CD8-positive, alpha-beta T cell (primary cell): ENCODE measurements at regions of chr1 and their contacts with region 1.

Region 1: DNA sequence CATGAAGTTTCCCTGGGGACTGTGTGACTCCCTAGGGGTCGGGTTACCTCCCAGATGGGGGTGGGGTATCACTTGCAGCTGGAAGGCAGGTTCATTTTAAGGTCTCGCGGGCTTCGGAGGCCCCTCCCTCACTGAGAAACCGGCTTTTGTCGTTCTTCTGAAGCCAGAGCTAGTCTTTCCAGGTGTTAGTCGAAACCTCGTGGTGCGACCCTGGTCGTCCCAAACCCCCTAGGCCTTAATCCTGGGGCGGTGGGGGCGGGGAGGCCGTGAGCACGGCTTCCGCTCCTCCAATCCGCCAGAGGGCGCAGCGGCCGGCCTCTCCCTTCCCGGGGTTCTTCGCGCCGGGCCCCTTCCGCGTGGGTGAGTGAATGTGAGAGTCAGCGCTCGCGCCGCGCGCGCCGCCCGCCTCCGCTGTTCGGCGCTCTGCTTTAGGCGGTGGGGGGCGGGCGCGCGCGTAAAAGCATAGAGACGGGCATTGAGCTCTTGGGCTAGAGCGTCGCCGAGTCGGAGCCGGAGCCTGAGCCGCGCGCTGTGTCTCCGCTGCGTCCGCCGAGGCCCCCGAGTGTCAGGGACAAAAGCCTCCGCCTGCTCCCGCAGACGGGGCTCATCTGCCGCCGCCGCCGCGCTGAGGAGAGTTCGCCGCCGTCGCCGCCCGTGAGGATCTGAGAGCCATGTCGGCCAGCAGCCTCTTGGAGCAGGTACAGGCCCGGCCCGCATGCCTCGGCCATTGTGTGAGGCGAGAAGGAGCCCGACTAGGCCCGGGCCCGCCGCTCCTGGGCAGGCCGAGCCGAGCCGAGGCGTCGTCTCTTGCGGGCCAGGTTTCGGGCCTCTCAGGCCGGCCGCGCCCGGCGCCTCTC is at the start of gene YTHDF2:
- DNase-seq: peak; percentile 96 to 99 (median 98)
- ATAC-seq: peak; percentile 92
- H3K4me3 ChIP-seq: peak within 1 kb of the TSS; percentile 89
- H3K4me3 Mint-ChIP-seq: peak within 1 kb of the TSS; percentile 97
- H3K27ac ChIP-seq: peak within 1 kb of the TSS; percentile 84 to 96
- H3K27ac Mint-ChIP-seq: peak within 1 kb of the TSS; percentile 96
- H3K4me1 ChIP-seq: peaks cover 42% of the 10 kb centered on the region
- H3K4me1 Mint-ChIP-seq: peaks cover 32% of the 10 kb centered on the region
- H3K27me3 ChIP-seq: no peaks in the 10 kb centered on the region
- H3K27me3 Mint-ChIP-seq: no peaks in the 10 kb centered on the region
- CTCF ChIP-seq: peak; percentile 80
- total RNA-seq, gene YTHDF2: 95.3 to 101 TPM

Region 2: DNA sequence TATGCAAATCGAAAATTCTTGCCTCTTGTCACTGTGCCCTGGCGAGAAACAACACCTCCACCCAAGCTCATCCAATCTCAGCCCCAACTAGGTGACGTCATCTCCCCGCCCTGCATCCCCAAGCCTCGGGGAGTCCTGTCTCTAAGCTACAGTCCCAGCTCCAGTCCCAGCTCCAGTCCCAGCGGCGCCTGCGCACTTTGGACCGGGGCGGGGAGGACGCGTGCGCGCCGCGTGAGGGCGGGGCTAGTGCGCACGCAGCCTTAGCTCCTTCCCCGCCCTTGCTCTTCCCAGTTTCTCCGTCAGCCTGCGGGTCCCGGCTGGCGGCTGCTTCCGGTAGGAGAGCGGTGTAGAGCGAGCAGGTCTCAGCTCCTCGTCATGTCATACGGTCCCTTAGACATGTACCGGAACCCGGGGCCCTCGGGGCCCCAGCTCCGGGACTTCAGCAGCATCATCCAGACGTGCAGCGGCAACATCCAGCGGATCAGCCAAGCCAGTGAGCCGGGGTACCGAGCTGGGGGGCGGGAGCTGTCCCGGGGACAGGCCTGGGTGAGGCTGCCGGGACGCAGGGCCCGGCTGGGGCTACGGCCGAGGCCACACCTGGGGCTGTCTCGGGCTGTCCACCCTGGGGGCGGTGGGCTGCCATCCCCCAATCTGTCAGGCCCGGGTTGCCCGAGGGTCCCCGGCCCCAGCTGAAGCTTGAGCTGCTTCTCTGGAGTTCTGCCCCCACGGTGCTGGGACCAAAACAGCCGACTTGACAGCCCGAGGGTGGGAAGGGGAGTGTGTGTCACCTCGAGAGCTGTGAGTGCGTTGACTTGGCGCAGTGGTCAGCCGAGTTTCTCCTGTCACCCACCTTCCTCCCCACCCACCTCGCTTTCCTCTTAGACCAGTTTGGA is 963.5 kb before region 1 on chr1 and contains the start of gene STX12:
- CTCF ChIA-PET with region 1: no interaction called
- POLR2A ChIA-PET with region 1: no interaction called
- intact Hi-C with region 1: loop called in 1 of 2 experiments (anchors 2 kb)
- DNase-seq: peak; percentile 96 to 100 (median 98)
- ATAC-seq: peak; percentile 91
- H3K4me3 ChIP-seq: peak within 1 kb of the TSS; percentile 94 to 98
- H3K4me3 Mint-ChIP-seq: peak within 1 kb of the TSS; percentile 91
- H3K27ac ChIP-seq: peak within 1 kb of the TSS; percentile 76 to 94
- H3K27ac Mint-ChIP-seq: peak within 1 kb of the TSS; percentile 98
- H3K4me1 ChIP-seq: peaks cover 16% of the 10 kb centered on the region
- H3K4me1 Mint-ChIP-seq: peaks cover 37% of the 10 kb centered on the region
- H3K27me3 ChIP-seq: no peaks in the 10 kb centered on the region
- H3K27me3 Mint-ChIP-seq: no peaks in the 10 kb centered on the region
- CTCF ChIP-seq: no peak
- total RNA-seq, gene STX12: 21.0 to 26.0 TPM

Region 3: DNA sequence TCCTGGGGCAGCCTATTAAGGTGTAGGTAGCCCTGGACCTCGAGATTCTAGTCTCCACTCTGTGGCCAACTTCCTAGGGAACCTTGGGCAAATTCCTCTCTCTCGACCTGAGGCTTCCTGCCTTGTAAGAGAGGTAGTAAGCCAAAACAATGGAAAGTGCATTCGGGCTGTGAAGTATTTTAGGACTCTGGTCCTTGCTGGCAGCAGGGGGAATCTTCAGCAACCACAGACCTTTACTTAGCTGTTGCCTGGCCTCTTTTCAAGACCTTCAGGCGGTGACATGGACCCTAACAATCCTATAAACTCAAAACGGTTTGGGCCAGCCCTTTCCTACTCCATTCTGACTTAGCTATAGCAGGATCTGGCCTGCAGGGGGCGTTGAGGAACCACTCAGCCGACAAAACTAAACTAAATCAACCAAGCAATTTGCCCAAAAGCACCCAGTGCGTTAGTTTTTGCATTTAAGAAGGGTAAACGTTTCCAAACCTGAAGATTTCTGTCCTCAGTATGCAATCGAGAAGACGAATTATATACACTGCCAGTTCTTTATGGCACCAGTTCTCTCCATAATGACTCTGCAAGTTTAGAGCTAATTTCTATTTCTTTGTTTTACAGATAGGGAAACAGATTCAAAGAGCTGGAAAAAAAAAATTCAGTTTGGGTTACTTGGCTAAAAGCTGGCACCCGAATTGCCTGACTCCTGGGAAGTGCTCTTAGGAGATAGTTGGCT is 488.2 kb before region 1 on chr1:
- CTCF ChIA-PET with region 1: no interaction called
- POLR2A ChIA-PET with region 1: interaction called, 3 read pairs
- intact Hi-C with region 1: loop called in 1 of 2 experiments (anchors 5 kb)
- DNase-seq: peak; percentile 72 to 89 (median 84)
- ATAC-seq: peak; percentile 18
- H3K4me3 ChIP-seq: peak overlapping the region in 1 of 2 experiments; percentile 28
- H3K4me3 Mint-ChIP-seq: peak overlapping the region; percentile 61
- H3K27ac ChIP-seq: peak overlapping the region; percentile 65 to 94
- H3K27ac Mint-ChIP-seq: peak overlapping the region; percentile 96
- H3K4me1 ChIP-seq: peaks cover 40% of the 10 kb centered on the region
- H3K4me1 Mint-ChIP-seq: peaks cover 44% of the 10 kb centered on the region
- H3K27me3 ChIP-seq: no peaks in the 10 kb centered on the region
- H3K27me3 Mint-ChIP-seq: no peaks in the 10 kb centered on the region
- CTCF ChIP-seq: peak; percentile 90

Region 4: DNA sequence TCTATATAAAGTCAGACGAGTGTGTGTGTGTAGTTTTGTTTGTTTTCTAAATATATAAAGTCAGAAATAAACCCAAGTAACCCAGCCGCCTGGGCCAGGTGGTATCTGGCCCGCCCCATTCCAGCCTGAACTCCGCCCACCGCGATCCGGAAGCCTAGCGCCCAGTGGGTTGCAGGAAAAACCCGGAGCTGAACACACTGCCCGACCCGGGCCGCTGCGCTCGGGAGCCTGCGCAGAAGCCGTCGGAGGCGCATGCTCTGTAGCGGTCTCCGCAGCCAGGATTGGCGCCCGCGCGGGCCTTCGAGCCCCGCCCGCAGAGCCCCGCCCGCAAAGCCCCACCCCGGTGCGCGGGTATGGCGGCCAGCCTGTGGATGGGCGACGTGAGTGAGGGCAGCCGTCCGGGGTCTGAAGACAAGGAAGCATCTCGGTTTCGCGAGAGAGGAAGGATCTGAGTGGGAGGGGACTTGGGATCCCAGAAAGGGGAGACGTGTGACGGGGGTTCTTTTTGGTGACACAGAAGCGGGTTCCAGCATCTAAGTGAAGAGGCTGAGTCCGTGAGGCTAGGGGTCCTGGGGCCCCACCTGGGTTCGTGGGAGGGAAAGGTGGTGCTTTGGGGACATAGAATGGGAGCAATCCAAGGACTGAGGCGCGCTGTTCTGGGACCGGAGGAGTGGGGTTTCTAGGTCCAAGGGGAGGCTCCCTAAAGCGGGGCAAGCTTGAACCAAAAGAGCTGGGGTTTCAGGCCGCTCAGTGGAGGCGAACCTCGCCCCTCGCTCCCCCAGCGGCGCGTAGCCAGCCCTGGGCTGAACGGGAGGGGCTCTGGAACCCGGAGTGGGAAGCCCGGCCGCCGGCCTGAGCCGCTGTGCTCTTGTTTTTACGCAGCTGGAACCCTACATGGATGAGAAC is 183.7 kb before region 1 on chr1 and contains the start of gene TRNAU1AP:
- CTCF ChIA-PET with region 1: no interaction called
- POLR2A ChIA-PET with region 1: no interaction called
- intact Hi-C with region 1: loop called (anchors 2 kb)
- DNase-seq: peak; percentile 95 to 98 (median 97)
- ATAC-seq: peak; percentile 96
- H3K4me3 ChIP-seq: peak within 1 kb of the TSS; percentile 91 to 98
- H3K4me3 Mint-ChIP-seq: peak within 1 kb of the TSS; percentile 99
- H3K27ac ChIP-seq: peak within 1 kb of the TSS; percentile 77 to 86
- H3K27ac Mint-ChIP-seq: peak within 1 kb of the TSS; percentile 99
- H3K4me1 ChIP-seq: peaks cover 15% of the 10 kb centered on the region
- H3K4me1 Mint-ChIP-seq: peaks cover 24% of the 10 kb centered on the region
- H3K27me3 ChIP-seq: no peaks in the 10 kb centered on the region
- H3K27me3 Mint-ChIP-seq: no peaks in the 10 kb centered on the region
- CTCF ChIP-seq: no peak
- total RNA-seq, gene TRNAU1AP: 20.5 to 25.7 TPM

Region 5: DNA sequence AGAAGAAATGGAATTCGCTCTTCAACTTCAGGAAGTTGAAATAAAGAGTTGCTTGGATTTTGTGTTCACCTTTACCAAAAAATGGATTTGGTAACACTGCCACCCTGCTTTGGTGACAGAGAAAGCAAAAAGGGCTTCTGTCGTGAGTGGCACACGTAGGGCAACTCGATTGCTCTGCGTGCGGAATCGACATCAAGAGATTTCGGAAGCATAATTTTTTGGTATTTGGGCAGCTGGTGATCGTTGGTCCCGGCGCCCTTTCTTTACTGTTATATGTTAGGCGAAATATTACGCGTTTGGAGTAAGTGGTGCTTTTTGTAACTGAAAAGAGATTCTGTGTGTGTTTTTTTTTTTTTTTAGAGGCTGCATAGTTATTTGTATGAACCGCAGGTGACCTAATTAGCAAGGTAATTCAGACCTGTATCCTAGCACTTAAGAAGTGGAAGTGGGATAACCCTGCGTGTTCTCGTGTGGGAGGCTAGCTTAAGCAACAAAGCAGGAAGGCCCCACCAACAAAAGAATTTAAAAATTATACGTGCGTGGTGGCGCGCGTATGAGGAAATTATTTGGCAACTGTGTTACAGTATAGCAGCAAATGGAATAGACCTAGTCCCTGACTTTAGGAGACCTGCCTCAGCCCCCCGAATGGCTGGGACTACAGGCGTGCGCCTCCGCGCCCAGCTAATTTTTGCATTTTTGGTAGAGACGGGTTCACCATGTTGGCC is 88.0 kb before region 1 on chr1 and contains the start of gene RNU11:
- CTCF ChIA-PET with region 1: interaction called, 16 read pairs
- POLR2A ChIA-PET with region 1: interaction called, 53 read pairs
- intact Hi-C with region 1: loop called (anchors 1 kb)
- DNase-seq: peak; percentile 76 to 97 (median 87)
- ATAC-seq: peak; percentile 65
- H3K4me3 ChIP-seq: peak within 1 kb of the TSS; percentile 41 to 65
- H3K4me3 Mint-ChIP-seq: peak within 1 kb of the TSS; percentile 80
- H3K27ac ChIP-seq: peak within 1 kb of the TSS; percentile 96 to 98
- H3K27ac Mint-ChIP-seq: peak within 1 kb of the TSS; percentile 99
- H3K4me1 ChIP-seq: peaks cover 30% of the 10 kb centered on the region
- H3K4me1 Mint-ChIP-seq: peaks cover 32% of the 10 kb centered on the region
- H3K27me3 ChIP-seq: no peaks in the 10 kb centered on the region
- H3K27me3 Mint-ChIP-seq: no peaks in the 10 kb centered on the region
- CTCF ChIP-seq: no peak
- total RNA-seq, gene RNU11: not detected

Region 6: GRCh38 chr1:28886731-28887418 is 150.2 kb after region 1 on chr1:
- CTCF ChIA-PET with region 1: interaction called, 3 read pairs
- POLR2A ChIA-PET with region 1: no interaction called
- intact Hi-C with region 1: loop called in 1 of 2 experiments (anchors 5 kb)
- DNase-seq: peak; percentile 80 to 94 (median 87)
- ATAC-seq: peak; percentile 71
- H3K4me3 ChIP-seq: peak overlapping the region; percentile 93 to 94
- H3K4me3 Mint-ChIP-seq: peak overlapping the region; percentile 87
- H3K27ac ChIP-seq: peak overlapping the region; percentile 67 to 88
- H3K27ac Mint-ChIP-seq: peak overlapping the region; percentile 96
- H3K4me1 ChIP-seq: peaks cover 41% of the 10 kb centered on the region
- H3K4me1 Mint-ChIP-seq: peaks cover 59% of the 10 kb centered on the region
- H3K27me3 ChIP-seq: no peaks in the 10 kb centered on the region
- H3K27me3 Mint-ChIP-seq: no peaks in the 10 kb centered on the region
- CTCF ChIP-seq: no peak